Natural killer cell (primary cell): ENCODE measurements at regions of chr2 and their contacts with region 1.

Region 1: GRCh38 chr2:3959372-3959771 is 256.0 kb downstream of the DCDC2C start:
- DNase-seq: peak in 1 of 2 donors; percentile 20
- ATAC-seq: peak in 1 of 3 donors; percentile 46
- H3K4me3 ChIP-seq: no peak overlapping the region
- H3K4me3 Mint-ChIP-seq: no peak overlapping the region
- H3K27ac ChIP-seq: no peak overlapping the region
- H3K27ac Mint-ChIP-seq: no peak overlapping the region
- H3K4me1 ChIP-seq: no peaks in the 10 kb centered on the region
- H3K4me1 Mint-ChIP-seq: no peaks in the 10 kb centered on the region
- H3K27me3 ChIP-seq: no peaks in the 10 kb centered on the region
- H3K27me3 Mint-ChIP-seq: no peaks in the 10 kb centered on the region
- CTCF ChIP-seq: peak; percentile 85

Region 2: DNA sequence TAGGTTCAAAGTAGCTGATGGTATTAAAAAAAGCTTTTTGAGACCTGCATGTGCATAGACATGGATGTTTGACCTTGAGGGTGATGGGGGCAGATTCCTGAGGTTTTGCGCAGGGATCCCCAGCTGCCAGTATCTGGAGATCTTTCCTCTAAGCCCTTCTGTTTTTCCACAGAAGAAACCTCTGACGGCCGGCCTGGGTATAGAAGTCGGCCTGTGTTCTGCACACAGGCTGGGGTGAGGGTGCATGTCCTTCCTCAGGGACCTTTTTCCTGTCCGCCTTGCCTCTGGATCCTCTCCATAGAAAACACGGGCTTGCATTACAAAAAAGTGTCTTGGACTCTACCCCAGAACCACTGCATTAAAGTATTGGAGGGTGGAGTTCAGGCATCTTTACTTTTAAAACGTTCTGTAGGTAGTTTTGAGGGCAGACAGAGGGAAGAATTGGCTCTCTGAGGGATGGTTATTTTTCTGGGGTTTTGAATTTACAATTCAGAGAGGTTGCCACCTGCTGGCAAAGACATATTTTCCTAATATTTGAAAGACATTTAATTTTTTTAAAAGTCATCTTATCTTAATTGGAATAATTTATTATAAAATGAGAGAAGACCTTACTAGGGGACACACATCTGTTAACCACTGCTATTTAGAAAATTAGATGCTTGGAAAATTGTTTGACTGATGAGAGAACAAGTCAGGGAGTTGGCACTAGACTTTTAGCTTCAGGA is 94.6 kb after region 1 on chr2:
- intact Hi-C with region 1: loop called (anchors 1 kb)
- DNase-seq: no peak
- ATAC-seq: no peak
- H3K4me3 ChIP-seq: no peak overlapping the region
- H3K4me3 Mint-ChIP-seq: peak overlapping the region; percentile 23
- H3K27ac ChIP-seq: no peak overlapping the region
- H3K27ac Mint-ChIP-seq: no peak overlapping the region
- H3K4me1 ChIP-seq: peaks cover 10% of the 10 kb centered on the region
- H3K4me1 Mint-ChIP-seq: peaks cover 16 to 23% of the 10 kb centered on the region in 2 donors
- H3K27me3 ChIP-seq: no peaks in the 10 kb centered on the region
- H3K27me3 Mint-ChIP-seq: peaks cover 0 to 4% of the 10 kb centered on the region in 2 donors
- CTCF ChIP-seq: no peak

Region 3: GRCh38 chr2:5365871-5366461 is 1406.6 kb after region 1 on chr2:
- intact Hi-C with region 1: loop called (anchors 5 kb)
- DNase-seq: peak in 1 of 2 donors; percentile 3
- ATAC-seq: peak in 1 of 3 donors; percentile 20
- H3K4me3 ChIP-seq: no peak overlapping the region
- H3K4me3 Mint-ChIP-seq: no peak overlapping the region
- H3K27ac ChIP-seq: no peak overlapping the region
- H3K27ac Mint-ChIP-seq: no peak overlapping the region
- H3K4me1 ChIP-seq: no peaks in the 10 kb centered on the region
- H3K4me1 Mint-ChIP-seq: no peaks in the 10 kb centered on the region
- H3K27me3 ChIP-seq: no peaks in the 10 kb centered on the region
- H3K27me3 Mint-ChIP-seq: no peaks in the 10 kb centered on the region
- CTCF ChIP-seq: no peak